CD4-positive, alpha-beta T cell (primary cell): ENCODE measurements at regions of chr12 and their contacts with region 1.

Region 1: DNA sequence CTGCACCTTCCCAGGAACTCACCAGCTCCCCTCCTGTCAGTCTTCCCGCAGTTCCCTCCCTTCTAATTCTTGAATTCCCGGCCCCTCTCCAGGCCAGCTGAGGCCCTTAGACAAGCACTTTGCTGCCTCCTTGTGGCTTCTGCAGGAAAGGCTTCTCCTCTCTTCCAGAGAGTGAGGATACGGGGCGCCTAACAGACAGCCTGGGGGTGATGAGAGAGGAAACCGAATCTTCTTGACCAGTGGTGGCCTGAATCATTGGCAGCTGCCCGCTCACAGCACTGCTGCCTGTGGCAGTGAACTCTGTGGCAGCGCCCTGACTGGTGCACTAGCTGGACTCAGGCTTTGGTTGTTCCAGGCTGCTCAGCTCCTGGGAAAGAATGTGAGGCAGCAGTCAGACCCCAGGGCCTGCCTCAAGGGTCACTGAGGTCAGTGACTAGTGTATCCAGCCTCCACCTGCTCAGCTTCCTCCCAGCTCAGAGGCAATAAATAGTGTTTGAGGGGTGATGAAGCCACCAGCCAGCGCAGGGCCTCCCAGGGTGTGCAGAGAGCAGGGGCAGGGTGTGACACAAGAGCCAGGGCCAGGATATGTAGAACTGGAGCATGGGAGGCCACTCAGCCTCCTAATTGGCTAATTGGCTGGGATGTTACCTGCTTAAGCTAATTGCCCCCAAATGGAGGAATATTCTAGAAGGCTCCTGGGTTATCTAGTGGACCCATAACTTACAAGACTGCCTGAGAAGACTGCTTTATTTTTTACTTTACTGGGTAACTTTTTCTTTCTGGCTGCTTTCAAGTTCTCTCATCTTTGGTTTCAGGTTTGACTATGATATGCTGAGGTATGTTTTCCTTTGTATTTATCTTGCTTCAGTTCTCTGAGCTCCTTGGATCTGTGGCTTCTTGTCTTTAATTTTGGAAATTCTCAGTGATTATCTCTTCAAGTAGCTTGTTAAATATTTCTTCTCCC is 12.9 kb upstream of the MCRS1 start:
- DNase-seq: peak; percentile 24 to 73 (median 46)
- ATAC-seq: peak; percentile 84
- H3K4me3 ChIP-seq: no peak overlapping the region
- H3K4me3 Mint-ChIP-seq: no peak overlapping the region
- H3K27ac ChIP-seq: no peak overlapping the region
- H3K27ac Mint-ChIP-seq: no peak overlapping the region
- H3K4me1 ChIP-seq: peaks cover 9% of the 10 kb centered on the region
- H3K4me1 Mint-ChIP-seq: peaks cover 6% of the 10 kb centered on the region
- H3K27me3 ChIP-seq: no peaks in the 10 kb centered on the region
- H3K27me3 Mint-ChIP-seq: no peaks in the 10 kb centered on the region
- CTCF ChIP-seq: peak; percentile 66

Region 2: DNA sequence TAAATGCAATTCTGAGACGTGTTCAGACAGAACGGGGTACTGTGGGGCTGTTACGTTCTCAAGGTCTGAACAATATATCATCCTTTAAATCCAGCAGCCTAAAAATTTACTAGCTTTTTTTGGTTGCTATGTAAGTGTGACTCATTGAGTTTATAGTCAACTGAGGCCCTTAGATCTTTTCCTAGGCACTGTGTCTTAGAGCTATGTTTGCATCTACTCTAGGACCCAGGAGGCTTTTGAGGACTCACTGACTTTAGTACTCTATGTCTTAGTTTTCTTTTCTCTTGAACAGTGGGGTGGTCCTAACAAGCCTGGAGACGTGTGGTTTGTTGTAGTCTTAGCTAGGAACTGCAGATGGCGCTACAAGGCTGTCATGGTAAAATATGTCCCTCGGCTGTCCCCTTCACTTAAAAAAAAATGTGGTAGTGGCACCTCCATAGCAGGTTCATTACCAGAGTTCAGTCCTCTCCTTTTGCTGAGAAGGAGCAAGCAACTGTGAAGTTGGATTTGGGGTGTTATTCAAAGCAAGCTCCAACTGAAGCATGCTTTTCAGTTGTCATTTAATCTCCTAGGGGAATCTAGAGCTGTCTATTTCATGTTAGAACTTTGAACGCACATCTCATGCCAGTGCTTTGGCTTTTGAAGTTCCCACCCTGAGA is 222.2 kb before region 1 on chr12:
- CTCF ChIA-PET with region 1: interaction called, 20 read pairs
- POLR2A ChIA-PET with region 1: interaction called, 3 read pairs
- intact Hi-C with region 1: loop called (anchors 1 kb)
- DNase-seq: peak in 8 of 14 experiments; percentile 31 to 86 (median 62)
- ATAC-seq: peak; percentile 96
- H3K4me3 ChIP-seq: no peak overlapping the region
- H3K4me3 Mint-ChIP-seq: peak overlapping the region; percentile 34
- H3K27ac ChIP-seq: no peak overlapping the region
- H3K27ac Mint-ChIP-seq: no peak overlapping the region
- H3K4me1 ChIP-seq: peaks cover 3% of the 10 kb centered on the region
- H3K4me1 Mint-ChIP-seq: peaks cover 7% of the 10 kb centered on the region
- H3K27me3 ChIP-seq: peaks cover 9 to 12% of the 10 kb centered on the region in 2 experiments
- H3K27me3 Mint-ChIP-seq: peaks cover 29% of the 10 kb centered on the region
- CTCF ChIP-seq: peak; percentile 78

Region 3: GRCh38 chr12:49615725-49616124 is 34.9 kb after region 1 on chr12:
- CTCF ChIA-PET with region 1: interaction called, 3 read pairs
- POLR2A ChIA-PET with region 1: no interaction called
- intact Hi-C with region 1: loop called in 1 of 2 experiments (anchors 5 kb)
- DNase-seq: no peak
- ATAC-seq: no peak
- H3K4me3 ChIP-seq: no peak overlapping the region
- H3K4me3 Mint-ChIP-seq: no peak overlapping the region
- H3K27ac ChIP-seq: no peak overlapping the region
- H3K27ac Mint-ChIP-seq: no peak overlapping the region
- H3K4me1 ChIP-seq: no peaks in the 10 kb centered on the region
- H3K4me1 Mint-ChIP-seq: no peaks in the 10 kb centered on the region
- H3K27me3 ChIP-seq: no peaks in the 10 kb centered on the region
- H3K27me3 Mint-ChIP-seq: peaks cover 18% of the 10 kb centered on the region
- CTCF ChIP-seq: no peak

Region 4: GRCh38 chr12:49662998-49663843 is 82.4 kb after region 1 on chr12:
- CTCF ChIA-PET with region 1: no interaction called
- POLR2A ChIA-PET with region 1: no interaction called
- intact Hi-C with region 1: no loop called
- DNase-seq: peak; percentile 53 to 91 (median 74)
- ATAC-seq: peak; percentile 97
- H3K4me3 ChIP-seq: peak overlapping the region; percentile 10
- H3K4me3 Mint-ChIP-seq: peak overlapping the region; percentile 90
- H3K27ac ChIP-seq: peak overlapping the region; percentile 88 to 97
- H3K27ac Mint-ChIP-seq: peak overlapping the region; percentile 97
- H3K4me1 ChIP-seq: peaks cover 65% of the 10 kb centered on the region
- H3K4me1 Mint-ChIP-seq: peaks cover 83% of the 10 kb centered on the region
- H3K27me3 ChIP-seq: no peaks in the 10 kb centered on the region
- H3K27me3 Mint-ChIP-seq: no peaks in the 10 kb centered on the region
- CTCF ChIP-seq: no peak

Region 5: GRCh38 chr12:49683599-49684309 is 102.9 kb after region 1 on chr12:
- CTCF ChIA-PET with region 1: no interaction called
- POLR2A ChIA-PET with region 1: no interaction called
- intact Hi-C with region 1: no loop called
- DNase-seq: no peak
- ATAC-seq: peak; percentile 34
- H3K4me3 ChIP-seq: no peak overlapping the region
- H3K4me3 Mint-ChIP-seq: no peak overlapping the region
- H3K27ac ChIP-seq: no peak overlapping the region
- H3K27ac Mint-ChIP-seq: peak overlapping the region; percentile 6
- H3K4me1 ChIP-seq: peaks cover 7% of the 10 kb centered on the region
- H3K4me1 Mint-ChIP-seq: peaks cover 60% of the 10 kb centered on the region
- H3K27me3 ChIP-seq: no peaks in the 10 kb centered on the region
- H3K27me3 Mint-ChIP-seq: no peaks in the 10 kb centered on the region
- CTCF ChIP-seq: no peak